ENCODE measurements at regions of chr14 and their contacts with region 1.

Region 1: GRCh38 chr14:52351233-52352060 is 37.3 kb downstream of the PTGER2 start:
- DNase-seq: peak; percentile 57
- ATAC-seq: peak; percentile 11
- H3K4me3 ChIP-seq: no peak overlapping the region
- H3K27ac ChIP-seq: peak overlapping the region; percentile 17
- H3K4me1 ChIP-seq: peaks cover 83% of the 10 kb centered on the region
- H3K27me3 ChIP-seq: no peaks in the 10 kb centered on the region
- CTCF ChIP-seq: no peak

Region 2: DNA sequence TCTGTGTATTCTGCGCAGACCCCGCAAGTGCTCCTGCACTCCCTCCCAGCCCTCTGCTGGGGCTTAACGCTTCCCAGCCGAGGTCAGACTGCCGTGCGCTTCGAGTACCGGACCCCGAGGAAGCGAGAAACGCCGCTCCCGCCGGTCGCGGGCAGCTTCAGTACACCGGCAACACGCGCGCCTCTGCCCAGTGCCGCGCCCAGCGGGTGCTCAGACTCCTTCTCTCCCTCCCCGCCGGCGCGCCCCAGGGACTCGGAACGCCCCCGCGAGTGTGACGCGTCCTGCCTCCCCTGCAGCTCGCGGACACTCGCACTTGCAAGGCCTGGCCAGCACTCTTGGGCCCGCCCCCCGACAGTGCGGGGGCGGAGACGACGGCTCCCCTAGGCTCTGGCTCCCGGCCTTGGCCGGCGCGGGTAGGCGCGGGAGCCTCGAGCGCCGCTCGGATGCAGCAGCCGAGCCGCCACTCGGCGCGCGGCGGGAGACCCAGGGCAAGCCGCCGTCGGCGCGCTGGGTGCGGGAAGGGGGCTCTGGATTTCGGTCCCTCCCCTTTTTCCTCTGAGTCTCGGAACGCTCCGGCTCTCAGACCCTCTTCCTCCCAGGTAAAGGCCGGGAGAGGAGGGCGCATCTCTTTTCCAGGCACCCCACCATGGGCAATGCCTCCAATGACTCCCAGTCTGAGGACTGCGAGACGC is 37.4 kb before region 1 on chr14 and contains the start of gene PTGER2:
- CTCF ChIA-PET with region 1: no interaction called
- POLR2A ChIA-PET with region 1: no interaction called
- intact Hi-C with region 1: loop called (anchors 1 kb)
- DNase-seq: peak; percentile 91
- ATAC-seq: peak; percentile 95
- H3K4me3 ChIP-seq: peak within 1 kb of the TSS; percentile 71
- H3K27ac ChIP-seq: no peak within 1 kb of the TSS
- H3K4me1 ChIP-seq: peaks cover 10% of the 10 kb centered on the region
- H3K27me3 ChIP-seq: no peaks in the 10 kb centered on the region
- CTCF ChIP-seq: no peak
- total RNA-seq, gene PTGER2: 4.6 and 4.7 TPM in 2 replicates

Region 3: GRCh38 chr14:52338051-52338681 is 13.3 kb before region 1 on chr14:
- CTCF ChIA-PET with region 1: no interaction called
- POLR2A ChIA-PET with region 1: no interaction called
- intact Hi-C with region 1: loop called (anchors 1 kb)
- DNase-seq: peak; percentile 95
- ATAC-seq: peak; percentile 100
- H3K4me3 ChIP-seq: no peak overlapping the region
- H3K27ac ChIP-seq: peak overlapping the region; percentile 43
- H3K4me1 ChIP-seq: peaks cover 33% of the 10 kb centered on the region
- H3K27me3 ChIP-seq: no peaks in the 10 kb centered on the region
- CTCF ChIP-seq: no peak

Region 4: GRCh38 chr14:52391881-52392615 is 40.6 kb after region 1 on chr14:
- CTCF ChIA-PET with region 1: no interaction called
- POLR2A ChIA-PET with region 1: interaction called, 6 read pairs
- intact Hi-C with region 1: loop called (anchors 1 kb)
- DNase-seq: peak; percentile 98
- ATAC-seq: peak; percentile 91
- H3K4me3 ChIP-seq: peak overlapping the region; percentile 26; the same call in 1 of the 2 replicates
- H3K27ac ChIP-seq: peak overlapping the region; percentile 77
- H3K4me1 ChIP-seq: peaks cover 24% of the 10 kb centered on the region
- H3K27me3 ChIP-seq: no peaks in the 10 kb centered on the region
- CTCF ChIP-seq: no peak

Region 5: DNA sequence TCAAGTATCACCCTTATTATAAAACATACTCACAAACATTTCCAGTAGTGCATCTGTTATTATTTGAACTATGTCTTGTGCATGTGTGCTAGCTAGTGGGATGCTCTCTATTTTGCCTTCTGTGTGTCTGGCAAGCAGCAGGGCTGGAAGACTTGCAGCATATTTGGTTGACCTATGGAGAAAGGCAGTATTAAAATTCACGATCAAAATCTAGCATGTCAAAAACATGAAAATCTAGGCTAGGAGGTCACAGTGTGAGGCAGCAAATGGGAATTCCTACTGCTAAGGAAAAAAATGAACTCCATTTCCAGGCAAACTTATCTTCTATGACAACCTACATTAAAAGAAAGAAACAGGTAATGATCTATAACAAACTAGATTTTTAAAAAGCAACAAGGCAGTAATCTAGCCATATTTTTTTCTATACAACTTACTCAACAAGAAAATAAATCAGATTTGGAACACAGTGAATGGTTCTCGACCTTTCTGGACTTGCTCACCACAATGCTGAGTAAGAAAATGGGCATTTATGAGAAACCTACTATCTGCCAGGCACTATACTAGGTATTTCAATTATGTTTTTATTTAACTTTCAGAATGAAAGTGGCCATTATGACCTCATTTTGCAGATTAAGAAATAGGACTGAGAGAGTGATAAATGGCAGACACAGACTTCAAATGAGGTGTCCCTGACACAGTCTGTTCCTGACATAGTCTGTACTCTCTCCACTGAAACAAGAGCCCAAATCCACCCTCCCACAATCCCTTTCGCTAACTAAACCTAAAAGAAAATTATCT is 104.0 kb after region 1 on chr14:
- CTCF ChIA-PET with region 1: no interaction called
- POLR2A ChIA-PET with region 1: no interaction called
- intact Hi-C with region 1: loop called (anchors 1 kb)
- DNase-seq: peak; percentile 70
- ATAC-seq: no peak
- H3K4me3 ChIP-seq: no peak overlapping the region
- H3K27ac ChIP-seq: peak overlapping the region; percentile 4; the same call in 1 of the 2 replicates
- H3K4me1 ChIP-seq: peaks cover 40% of the 10 kb centered on the region
- H3K27me3 ChIP-seq: no peaks in the 10 kb centered on the region
- CTCF ChIP-seq: no peak

Region 6: GRCh38 chr14:52513249-52513648 is 161.8 kb after region 1 on chr14:
- CTCF ChIA-PET with region 1: no interaction called
- POLR2A ChIA-PET with region 1: no interaction called
- intact Hi-C with region 1: no loop called
- DNase-seq: no peak
- ATAC-seq: no peak
- H3K4me3 ChIP-seq: no peak overlapping the region
- H3K27ac ChIP-seq: no peak overlapping the region
- H3K4me1 ChIP-seq: peaks cover 12% of the 10 kb centered on the region
- H3K27me3 ChIP-seq: no peaks in the 10 kb centered on the region
- CTCF ChIP-seq: no peak